H1 (cell line): ENCODE measurements at regions of chr17 and their contacts with region 1.

Region 1: DNA sequence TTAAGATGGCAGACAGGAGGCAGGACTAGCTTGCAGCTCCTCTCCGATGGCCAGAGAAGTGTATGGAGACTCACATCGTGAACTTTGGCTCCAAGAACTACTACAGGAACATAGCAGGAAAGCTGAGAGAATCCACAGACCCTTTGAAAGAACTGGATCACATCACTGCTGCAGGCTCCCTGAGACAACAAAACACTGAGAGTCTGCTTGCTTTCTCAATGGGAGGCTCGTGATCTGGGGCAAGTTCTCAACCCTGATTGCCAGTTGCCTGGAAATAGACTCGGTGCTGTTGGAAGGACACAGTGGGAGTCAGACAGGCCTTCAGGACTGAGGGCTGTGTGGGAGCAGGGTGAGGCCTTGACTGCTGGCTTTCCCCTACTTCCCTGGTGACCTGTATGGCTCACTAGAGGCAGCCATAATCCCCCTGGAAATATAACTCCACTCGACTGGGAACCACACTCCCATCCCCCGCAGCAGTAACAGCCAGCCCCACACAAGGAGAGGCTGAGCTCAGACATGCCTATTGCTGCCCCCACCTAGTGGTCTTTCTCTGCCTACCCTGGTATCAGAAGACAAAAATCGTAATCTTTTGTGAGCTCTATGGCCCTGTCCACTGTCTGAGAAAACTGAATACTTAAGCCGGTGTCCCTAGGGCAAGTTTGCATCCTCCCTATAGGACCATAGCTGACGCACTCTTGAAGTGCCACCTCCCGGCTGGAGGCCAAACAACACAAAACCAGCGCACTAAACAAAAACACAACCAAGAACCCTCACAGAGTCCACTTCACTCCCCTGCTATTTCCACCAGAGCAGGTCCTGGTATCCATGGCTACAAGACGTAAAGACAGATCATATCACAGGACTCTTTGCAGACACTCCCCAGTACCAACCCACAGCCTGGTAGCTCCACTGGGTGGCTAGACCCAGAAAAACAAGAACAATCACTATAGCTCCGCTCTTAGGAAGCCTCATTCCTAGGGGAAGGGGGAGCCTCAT is 238.3 kb downstream of the CEP112 start:
- DNase-seq: no peak
- H3K4me3 ChIP-seq: no peak overlapping the region
- H3K27ac ChIP-seq: no peak overlapping the region
- H3K4me1 ChIP-seq: no peaks in the 10 kb centered on the region
- H3K27me3 ChIP-seq: no peaks in the 10 kb centered on the region
- CTCF ChIP-seq: peak in 1 of 3 experiments; percentile 13; a peak in 1 of 4 replicates
- EP300 ChIP-seq: no peak
- POLR2A ChIP-seq: no peak
- RAD21 ChIP-seq: peak; percentile 12 to 32; a peak in 2 of 4 replicates

Region 2: GRCh38 chr17:65902831-65903522 is 50.6 kb before region 1 on chr17:
- CTCF ChIA-PET with region 1: no interaction called
- POLR2A ChIA-PET with region 1: no interaction called
- DNase-seq: no peak
- H3K4me3 ChIP-seq: no peak overlapping the region
- H3K27ac ChIP-seq: no peak overlapping the region
- H3K4me1 ChIP-seq: 0 out of 7 replicates have a peak, but pooled peaks cover 0 to 2% (median 0%) of the 10 kb centered on the region in 4 experiments
- H3K27me3 ChIP-seq: no peaks in the 10 kb centered on the region
- CTCF ChIP-seq: no peak
- EP300 ChIP-seq: no peak
- POLR2A ChIP-seq: no peak
- RAD21 ChIP-seq: no peak

Region 3: DNA sequence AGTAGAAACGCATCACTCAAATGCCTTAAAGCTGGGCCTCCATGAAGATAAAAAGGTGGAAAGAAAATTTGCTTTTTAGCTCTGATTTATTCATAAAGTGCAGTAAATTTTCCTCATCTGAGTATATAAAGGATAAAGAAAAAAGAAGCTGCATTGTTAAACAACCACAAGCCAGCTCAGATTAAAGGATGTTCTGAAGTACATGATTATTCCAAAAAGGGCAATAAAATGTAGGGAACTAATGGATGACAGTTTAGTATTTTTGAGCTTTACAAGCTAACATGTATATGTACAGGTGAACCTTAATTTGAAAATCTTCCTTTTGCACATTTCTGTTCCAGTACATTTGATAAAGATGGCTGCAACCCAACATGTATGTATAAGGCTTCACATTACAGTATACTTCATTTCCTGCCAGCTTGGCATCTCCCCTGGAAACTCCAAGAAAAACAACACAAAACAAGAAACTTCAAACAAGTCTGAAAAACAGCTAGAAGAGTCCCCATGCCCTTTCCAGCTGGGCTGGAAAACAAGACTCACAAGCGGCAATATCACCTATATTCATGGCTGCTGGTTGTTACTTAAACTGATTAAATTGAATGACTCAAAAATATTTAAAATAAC is 12.6 kb after region 1 on chr17:
- CTCF ChIA-PET with region 1: interaction called, 10 read pairs
- POLR2A ChIA-PET with region 1: no interaction called
- DNase-seq: no peak
- H3K4me3 ChIP-seq: no peak overlapping the region
- H3K27ac ChIP-seq: no peak overlapping the region
- H3K4me1 ChIP-seq: no peaks in the 10 kb centered on the region
- H3K27me3 ChIP-seq: no peaks in the 10 kb centered on the region
- CTCF ChIP-seq: no peak
- EP300 ChIP-seq: no peak
- POLR2A ChIP-seq: no peak
- RAD21 ChIP-seq: no peak

Region 4: GRCh38 chr17:66123163-66123562 is 169.5 kb after region 1 on chr17:
- CTCF ChIA-PET with region 1: no interaction called
- POLR2A ChIA-PET with region 1: no interaction called
- DNase-seq: no peak
- H3K4me3 ChIP-seq: no peak overlapping the region
- H3K27ac ChIP-seq: no peak overlapping the region
- H3K4me1 ChIP-seq: peaks cover 0 to 5% (median 1%) of the 10 kb centered on the region in 4 experiments; a peak in 1 of 7 replicates
- H3K27me3 ChIP-seq: no peaks in the 10 kb centered on the region
- CTCF ChIP-seq: no peak
- EP300 ChIP-seq: no peak
- POLR2A ChIP-seq: no peak
- RAD21 ChIP-seq: no peak